Left lung (tissue), 14 donors: ENCODE measurements at regions of chr6 and their contacts with region 1.

Region 1: DNA sequence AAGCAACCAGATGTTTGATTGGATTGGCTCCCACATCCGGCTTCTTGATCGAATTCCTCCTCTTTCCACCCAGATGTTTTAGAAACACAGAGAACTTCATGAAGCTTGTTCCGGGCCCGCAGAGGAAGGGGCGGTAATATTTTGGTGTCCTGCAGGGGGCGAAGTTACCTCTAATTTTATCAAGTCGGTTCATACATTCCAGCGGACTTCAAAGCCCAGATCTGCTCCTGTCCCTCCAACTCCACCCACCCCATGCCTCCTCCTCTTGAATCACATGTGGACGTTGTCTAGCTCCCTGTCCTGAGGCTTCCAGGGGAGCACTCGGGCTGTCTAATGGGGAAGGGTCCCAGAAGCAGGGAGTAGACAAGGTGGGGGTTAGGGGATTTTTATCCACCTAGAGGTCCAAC is 2.9 kb upstream of the BMP6 start:
- DNase-seq: peak in 3 of 4 donors; percentile 62 to 85 (median 69)
- ATAC-seq: peak; percentile 60
- H3K4me3 ChIP-seq: no peak overlapping the region
- H3K27ac ChIP-seq: no peak overlapping the region
- H3K4me1 ChIP-seq: peaks cover 11 to 37% of the 10 kb centered on the region in 2 donors
- H3K27me3 ChIP-seq: peaks cover 31 to 50% of the 10 kb centered on the region in 2 donors
- CTCF ChIP-seq: peak; percentile 50 to 63

Region 2: GRCh38 chr6:7300926-7301325 is 422.1 kb before region 1 on chr6:
- intact Hi-C with region 1: no loop called
- DNase-seq: no peak
- ATAC-seq: no peak
- H3K4me3 ChIP-seq: no peak overlapping the region
- H3K27ac ChIP-seq: no peak overlapping the region
- H3K4me1 ChIP-seq: peaks cover 4 to 8% of the 10 kb centered on the region in 2 donors
- H3K27me3 ChIP-seq: no peaks in the 10 kb centered on the region
- CTCF ChIP-seq: no peak

Region 3: DNA sequence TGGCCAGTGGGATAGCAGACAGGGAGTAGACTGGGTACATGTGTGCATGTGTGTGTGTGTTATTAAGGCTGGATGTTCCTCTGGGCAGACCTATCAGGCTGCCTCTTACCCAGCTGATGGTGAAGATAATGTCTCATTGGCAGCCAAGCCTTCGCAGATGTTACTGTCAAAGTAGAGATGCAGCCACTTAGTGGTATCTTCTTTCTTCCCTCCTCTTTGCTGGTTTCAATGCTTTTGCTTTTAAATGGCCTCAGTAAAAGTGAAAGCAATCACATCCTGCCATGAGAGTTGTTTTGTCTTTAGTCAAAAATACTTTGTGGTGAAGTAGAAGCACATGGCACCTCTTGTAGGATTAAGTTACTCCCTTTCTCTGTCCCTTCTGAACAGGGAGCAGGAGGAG is 75.5 kb before region 1 on chr6:
- intact Hi-C with region 1: no loop called
- DNase-seq: no peak
- ATAC-seq: no peak
- H3K4me3 ChIP-seq: no peak overlapping the region
- H3K27ac ChIP-seq: no peak overlapping the region
- H3K4me1 ChIP-seq: no peaks in the 10 kb centered on the region
- H3K27me3 ChIP-seq: no peaks in the 10 kb centered on the region
- CTCF ChIP-seq: no peak

Region 4: DNA sequence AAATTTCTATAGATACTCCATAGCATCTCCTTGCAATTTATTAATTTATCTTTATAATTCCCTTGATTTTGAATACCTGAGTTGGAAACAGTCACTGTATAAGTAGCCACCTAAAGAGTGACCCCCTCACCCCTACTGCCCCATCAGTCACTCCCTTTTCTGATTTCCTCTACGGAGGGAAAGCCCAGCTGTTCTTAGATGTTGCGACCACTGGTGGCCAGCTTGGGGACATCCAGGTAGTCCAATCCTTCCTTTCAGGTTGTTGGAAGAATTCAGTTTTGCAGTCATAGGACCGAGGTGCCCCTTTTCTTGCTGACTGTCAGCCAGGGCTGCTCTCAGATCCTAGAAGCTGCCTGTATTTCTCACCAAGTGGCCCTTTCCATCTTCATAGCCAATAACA is 90.7 kb after region 1 on chr6:
- intact Hi-C with region 1: no loop called
- DNase-seq: no peak
- ATAC-seq: no peak
- H3K4me3 ChIP-seq: no peak overlapping the region
- H3K27ac ChIP-seq: no peak overlapping the region
- H3K4me1 ChIP-seq: peaks cover 0 to 2% of the 10 kb centered on the region in 2 donors
- H3K27me3 ChIP-seq: no peaks in the 10 kb centered on the region
- CTCF ChIP-seq: no peak

Region 5: DNA sequence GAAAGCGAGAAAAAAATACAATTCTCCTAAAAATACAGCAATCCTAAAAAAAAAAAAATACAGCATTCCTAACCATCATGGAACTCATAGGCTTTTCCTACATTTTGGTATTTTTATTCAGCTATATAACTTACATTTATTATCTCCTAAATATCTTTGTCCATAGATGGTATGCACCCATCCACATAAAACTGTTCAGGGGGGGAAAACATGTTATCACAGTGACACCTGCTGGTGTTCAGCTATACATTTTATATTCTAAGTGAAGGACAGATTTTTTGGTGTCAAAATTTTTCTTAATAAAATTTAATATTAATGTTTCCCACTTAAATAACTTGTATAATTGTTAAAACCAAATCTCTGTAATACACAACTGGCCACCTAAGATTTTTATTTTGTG is 283.2 kb after region 1 on chr6:
- intact Hi-C with region 1: loop called in 1 of 2 experiments (anchors 5 kb)
- DNase-seq: peak in 1 of 4 donors; percentile 53
- ATAC-seq: peak; percentile 70
- H3K4me3 ChIP-seq: no peak overlapping the region
- H3K27ac ChIP-seq: no peak overlapping the region
- H3K4me1 ChIP-seq: no peaks in the 10 kb centered on the region
- H3K27me3 ChIP-seq: no peaks in the 10 kb centered on the region
- CTCF ChIP-seq: peak in 1 of 2 donors; percentile 35

Region 6: DNA sequence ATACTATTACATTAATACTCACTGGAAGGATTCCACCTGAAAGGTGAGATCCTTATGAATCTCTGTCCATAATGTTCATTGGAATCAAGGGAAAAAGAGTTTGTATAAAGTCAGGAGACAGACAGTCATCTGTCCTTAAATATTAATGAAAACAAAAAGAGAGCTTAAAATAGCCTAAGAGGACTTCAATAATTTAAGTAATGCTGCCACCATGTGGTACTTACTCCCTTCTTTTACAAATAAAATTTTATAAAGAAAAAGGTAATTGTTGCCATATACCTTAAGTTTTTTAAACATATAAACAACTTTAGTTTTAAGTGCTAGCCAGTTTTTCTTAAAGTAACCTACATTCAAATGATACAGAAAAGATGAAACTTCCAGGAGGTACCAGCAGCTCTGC is 336.1 kb after region 1 on chr6:
- intact Hi-C with region 1: loop called in 1 of 2 experiments (anchors 5 kb)
- DNase-seq: peak in 1 of 4 donors; percentile 26
- ATAC-seq: no peak
- H3K4me3 ChIP-seq: no peak overlapping the region
- H3K27ac ChIP-seq: no peak overlapping the region
- H3K4me1 ChIP-seq: peaks cover 0 to 10% of the 10 kb centered on the region in 2 donors
- H3K27me3 ChIP-seq: no peaks in the 10 kb centered on the region
- CTCF ChIP-seq: peak in 1 of 2 donors; percentile 25

Region 7: GRCh38 chr6:8749465-8749864 is 1026.4 kb after region 1 on chr6:
- intact Hi-C with region 1: no loop called
- DNase-seq: no peak
- ATAC-seq: no peak
- H3K4me3 ChIP-seq: no peak overlapping the region
- H3K27ac ChIP-seq: no peak overlapping the region
- H3K4me1 ChIP-seq: no peaks in the 10 kb centered on the region
- H3K27me3 ChIP-seq: no peaks in the 10 kb centered on the region
- CTCF ChIP-seq: no peak